Activated T-helper 1 cell treated with anti-CD3 and anti-CD28 coated beads, Interleukin-12 subunit alpha, Interleukin-12 subunit beta, Interleukin-2, Interleukin-4 antibody, amounts not matched to agents 30 ng/mL and 10 ng/mL and 1 ng/mL, durations not matched to agents 14 hours and 24 hours and 36 hours (primary cell): ENCODE measurements at regions of chr2 and their contacts with region 1.

Region 1: GRCh38 chr2:65300761-65301711 is 73.4 kb downstream of the ACTR2 start:
- DNase-seq: peak; percentile 59
- H3K4me3 Mint-ChIP-seq: peak overlapping the region; percentile 58
- H3K27ac Mint-ChIP-seq: peak overlapping the region; percentile 94
- H3K4me1 Mint-ChIP-seq: peaks cover 53% of the 10 kb centered on the region
- H3K27me3 Mint-ChIP-seq: peaks cover 37% of the 10 kb centered on the region

Region 2: GRCh38 chr2:64988420-64989125 is 312.5 kb before region 1 on chr2:
- intact Hi-C with region 1: loop called (anchors 10 kb)
- DNase-seq: peak; percentile 75
- H3K4me3 Mint-ChIP-seq: peak overlapping the region; percentile 88
- H3K27ac Mint-ChIP-seq: peak overlapping the region; percentile 92
- H3K4me1 Mint-ChIP-seq: peaks cover 79% of the 10 kb centered on the region
- H3K27me3 Mint-ChIP-seq: peaks cover 11% of the 10 kb centered on the region

Region 3: DNA sequence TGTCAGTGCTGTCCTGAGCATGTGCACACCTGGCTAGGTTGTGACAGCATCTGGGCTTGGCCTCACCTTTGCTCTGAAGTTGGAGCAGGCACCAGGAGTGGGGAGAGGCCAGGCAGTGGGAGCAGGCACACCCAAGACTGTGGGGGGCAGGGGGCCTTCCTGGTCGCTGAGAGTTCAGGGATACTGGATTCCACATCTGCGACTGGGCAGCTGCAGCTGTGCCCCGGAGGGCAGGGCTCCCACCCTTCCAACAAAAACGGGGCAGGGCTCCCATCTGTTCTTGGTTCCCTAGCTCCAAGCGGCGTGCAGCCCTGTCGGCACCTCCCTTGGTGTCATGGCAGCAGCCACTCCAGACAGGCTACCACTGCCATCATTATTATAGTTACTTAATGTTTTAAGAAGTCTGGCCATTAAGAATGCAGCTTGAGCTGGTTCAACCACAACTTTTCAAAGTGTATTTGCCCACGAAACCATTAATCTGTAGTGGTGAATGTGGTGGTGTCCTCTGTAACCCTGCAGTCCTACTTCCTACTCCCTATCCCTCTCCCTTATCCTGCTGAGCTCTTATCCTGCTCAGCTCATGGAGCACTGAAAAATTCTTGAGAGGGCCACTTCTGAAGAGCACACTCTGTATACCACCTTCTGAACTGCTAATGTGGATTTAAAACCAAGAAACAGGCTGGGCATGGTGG is 123.1 kb before region 1 on chr2:
- intact Hi-C with region 1: no loop called
- DNase-seq: no peak
- H3K4me3 Mint-ChIP-seq: no peak overlapping the region
- H3K27ac Mint-ChIP-seq: no peak overlapping the region
- H3K4me1 Mint-ChIP-seq: no peaks in the 10 kb centered on the region
- H3K27me3 Mint-ChIP-seq: peaks cover 8% of the 10 kb centered on the region

Region 4: GRCh38 chr2:65227425-65228262 is 73.4 kb before region 1 on chr2 and contains the start of gene ACTR2:
- intact Hi-C with region 1: loop called (anchors 1 kb)
- DNase-seq: peak; percentile 95
- H3K4me3 Mint-ChIP-seq: peak within 1 kb of the TSS; percentile 98
- H3K27ac Mint-ChIP-seq: peak within 1 kb of the TSS; percentile 99
- H3K4me1 Mint-ChIP-seq: peaks cover 36% of the 10 kb centered on the region
- H3K27me3 Mint-ChIP-seq: no peaks in the 10 kb centered on the region
- total RNA-seq, gene ACTR2: 285 and 295 TPM in 2 replicates

Region 5: GRCh38 chr2:65320042-65320725 is 19.1 kb after region 1 on chr2:
- intact Hi-C with region 1: loop called (anchors 1 kb)
- DNase-seq: no peak
- H3K4me3 Mint-ChIP-seq: no peak overlapping the region
- H3K27ac Mint-ChIP-seq: no peak overlapping the region
- H3K4me1 Mint-ChIP-seq: peaks cover 14% of the 10 kb centered on the region
- H3K27me3 Mint-ChIP-seq: peaks cover 3% of the 10 kb centered on the region

Region 6: GRCh38 chr2:65377556-65378192 is 76.6 kb after region 1 on chr2:
- intact Hi-C with region 1: loop called (anchors 1 kb)
- DNase-seq: no peak
- H3K4me3 Mint-ChIP-seq: peak overlapping the region; percentile 12
- H3K27ac Mint-ChIP-seq: peak overlapping the region; percentile 19
- H3K4me1 Mint-ChIP-seq: peaks cover 64% of the 10 kb centered on the region
- H3K27me3 Mint-ChIP-seq: peaks cover 8% of the 10 kb centered on the region

Region 7: DNA sequence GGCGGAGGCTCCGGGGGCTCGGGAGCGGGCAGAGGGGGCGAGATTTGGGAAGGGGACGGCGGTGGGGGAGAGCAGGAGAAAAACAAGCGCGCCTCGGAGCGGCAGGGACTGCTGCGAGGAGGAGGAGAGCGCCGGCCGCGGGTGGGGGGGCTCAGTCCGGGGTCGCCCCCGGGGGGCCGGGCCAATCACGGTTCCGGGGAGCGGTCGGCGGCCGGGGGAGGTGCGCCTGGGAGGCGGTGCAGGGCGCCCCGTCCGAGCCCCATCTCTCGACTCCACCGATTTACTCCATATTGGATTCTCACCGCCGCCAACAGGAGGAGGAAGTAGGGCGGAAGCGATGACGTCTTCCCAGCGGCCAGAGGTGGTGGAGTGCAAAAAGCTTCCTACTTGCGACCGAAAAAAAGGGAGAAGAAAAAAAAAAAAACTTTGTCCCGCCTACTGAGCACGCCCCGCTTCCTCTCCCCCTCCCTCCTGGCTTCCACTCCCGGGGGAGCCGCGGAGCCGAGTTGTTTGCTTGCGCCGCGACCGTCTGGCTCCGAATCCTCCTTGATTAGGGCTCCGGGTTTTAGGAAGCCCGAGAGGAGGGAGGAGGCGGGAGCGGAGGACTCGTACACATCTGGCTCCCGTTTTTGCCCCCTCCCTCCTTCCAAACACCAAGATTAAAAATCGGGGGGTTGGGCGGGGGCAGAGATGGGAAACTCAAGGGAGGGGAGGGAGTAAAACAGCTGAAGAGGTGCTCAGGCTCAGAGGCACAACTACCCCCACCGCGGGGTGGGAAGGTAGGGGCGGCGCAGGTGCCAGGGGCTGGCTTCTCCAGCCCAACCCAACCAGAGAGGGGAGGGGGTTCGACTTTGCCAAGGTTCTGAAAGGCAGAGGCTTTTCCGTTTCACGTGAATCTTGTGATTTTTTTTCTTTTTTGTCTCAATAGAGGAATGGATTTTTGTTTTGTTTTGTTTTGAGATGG is 131.5 kb after region 1 on chr2 and contains the start of gene SPRED2:
- intact Hi-C with region 1: loop called (anchors 1 kb)
- DNase-seq: peak; percentile 71
- H3K4me3 Mint-ChIP-seq: peak within 1 kb of the TSS; percentile 95
- H3K27ac Mint-ChIP-seq: peak within 1 kb of the TSS; percentile 92
- H3K4me1 Mint-ChIP-seq: peaks cover 24% of the 10 kb centered on the region
- H3K27me3 Mint-ChIP-seq: peaks cover 37% of the 10 kb centered on the region
- total RNA-seq, gene SPRED2: 8.5 and 9.4 TPM in 2 replicates